Dendritic cell treated with granulocyte-macrophage colony-stimulating factor and Interleukin-4, amounts not matched to agents 40 ng/mL and 50 ng/mL, for 4 days (primary cell): ENCODE measurements at regions of chr11 and their contacts with region 1.

Region 1: GRCh38 chr11:723120-723883 is 17.3 kb downstream of the EPS8L2 start:
- H3K4me3 Mint-ChIP-seq: peak overlapping the region; percentile 21
- H3K27ac Mint-ChIP-seq: no peak overlapping the region
- H3K4me1 Mint-ChIP-seq: peaks cover 28% of the 10 kb centered on the region
- H3K27me3 Mint-ChIP-seq: peaks cover 88% of the 10 kb centered on the region

Region 2: DNA sequence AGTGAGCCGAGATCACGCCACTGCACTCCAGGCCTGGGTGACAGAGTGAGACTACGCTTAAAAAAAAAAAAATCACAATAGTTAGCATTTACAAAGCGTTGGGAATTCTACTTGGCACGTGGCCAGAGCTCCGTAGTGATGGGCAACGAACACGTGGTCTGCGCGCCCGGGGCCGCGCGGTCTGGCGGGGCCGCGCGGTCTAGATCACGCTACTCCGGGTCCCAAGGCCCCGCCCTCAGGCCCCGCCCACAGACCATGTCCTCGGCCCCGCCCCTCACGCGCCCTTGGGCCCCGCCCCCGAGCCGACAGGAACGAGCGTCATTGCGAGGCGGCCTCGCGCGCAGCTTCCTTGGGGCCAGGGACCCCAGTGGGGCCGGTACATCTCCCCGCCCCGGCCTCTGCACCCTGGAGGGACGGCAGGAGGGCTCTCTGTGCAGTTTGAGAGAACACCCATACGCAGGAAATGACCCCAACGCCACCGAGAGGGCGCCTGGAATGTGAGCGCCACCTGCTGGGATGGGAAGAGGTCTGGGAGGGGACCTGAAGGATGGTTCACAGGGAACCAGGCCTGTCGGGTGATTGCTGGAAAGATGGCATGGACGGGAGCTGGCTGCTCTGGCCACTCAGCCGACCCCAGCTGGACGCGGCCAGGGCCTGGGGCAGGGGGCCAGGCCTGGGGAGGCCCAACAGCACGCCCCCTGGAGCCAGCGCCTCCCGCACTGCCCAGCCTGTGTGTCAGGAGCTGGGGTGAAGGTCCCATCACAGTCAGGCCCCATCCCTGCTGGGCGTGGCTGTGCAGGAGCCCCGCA is 275.2 kb before region 1 on chr11:
- intact Hi-C with region 1: no loop called
- H3K4me3 Mint-ChIP-seq: peak overlapping the region; percentile 94
- H3K27ac Mint-ChIP-seq: peak overlapping the region; percentile 96
- H3K4me1 Mint-ChIP-seq: peaks cover 31% of the 10 kb centered on the region
- H3K27me3 Mint-ChIP-seq: peaks cover 25% of the 10 kb centered on the region

Region 3: GRCh38 chr11:554824-555472 is 168.4 kb before region 1 on chr11:
- intact Hi-C with region 1: loop called (anchors 5 kb)
- H3K4me3 Mint-ChIP-seq: no peak overlapping the region
- H3K27ac Mint-ChIP-seq: no peak overlapping the region
- H3K4me1 Mint-ChIP-seq: peaks cover 15% of the 10 kb centered on the region
- H3K27me3 Mint-ChIP-seq: peaks cover 78% of the 10 kb centered on the region

Region 4: GRCh38 chr11:662689-663274 is 60.5 kb before region 1 on chr11:
- intact Hi-C with region 1: loop called (anchors 1 kb)
- H3K4me3 Mint-ChIP-seq: no peak overlapping the region
- H3K27ac Mint-ChIP-seq: no peak overlapping the region
- H3K4me1 Mint-ChIP-seq: peaks cover 27% of the 10 kb centered on the region
- H3K27me3 Mint-ChIP-seq: no peaks in the 10 kb centered on the region

Region 5: DNA sequence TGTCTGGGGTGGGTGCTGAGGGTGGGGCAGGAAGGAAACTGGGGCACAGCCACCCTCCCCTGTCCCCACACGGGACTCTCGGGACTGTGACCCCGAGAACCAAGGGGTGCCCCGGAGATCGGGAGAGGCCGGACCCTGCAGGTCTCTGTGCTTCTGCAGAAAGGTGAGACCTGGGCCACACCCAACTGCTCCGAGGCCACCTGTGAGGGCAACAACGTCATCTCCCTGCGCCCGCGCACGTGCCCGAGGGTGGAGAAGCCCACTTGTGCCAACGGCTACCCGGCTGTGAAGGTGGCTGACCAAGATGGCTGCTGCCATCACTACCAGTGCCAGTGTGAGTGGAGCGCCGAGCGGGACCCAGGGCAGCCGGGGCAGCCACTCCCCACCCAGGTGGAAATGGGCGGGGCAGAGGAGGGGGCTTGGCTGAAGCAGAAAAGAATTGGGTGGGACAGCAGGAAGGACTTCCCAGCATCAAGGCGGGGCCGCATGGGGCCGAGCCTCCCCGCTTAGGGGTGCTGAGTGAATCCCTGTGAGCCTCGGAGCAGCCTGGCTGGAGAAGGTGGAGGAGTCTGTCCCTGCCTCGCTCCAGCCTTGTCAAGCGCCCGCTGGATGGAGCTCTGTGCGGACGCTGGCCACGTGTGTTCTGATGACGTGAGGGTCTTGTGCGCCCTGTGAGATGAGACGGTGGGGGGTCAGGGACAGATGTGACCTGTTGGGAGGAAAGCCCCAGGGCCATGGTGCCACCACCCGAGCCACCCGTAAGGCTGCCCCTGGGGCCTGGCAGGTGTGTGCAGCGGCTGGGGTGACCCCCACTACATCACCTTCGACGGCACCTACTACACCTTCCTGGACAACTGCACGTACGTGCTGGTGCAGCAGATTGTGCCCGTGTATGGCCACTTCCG is 470.3 kb after region 1 on chr11:
- intact Hi-C with region 1: no loop called
- H3K4me3 Mint-ChIP-seq: no peak overlapping the region
- H3K27ac Mint-ChIP-seq: no peak overlapping the region
- H3K4me1 Mint-ChIP-seq: no peaks in the 10 kb centered on the region
- H3K27me3 Mint-ChIP-seq: no peaks in the 10 kb centered on the region